CD8-positive, alpha-beta T cell (primary cell): ENCODE measurements at regions of chr7 and their contacts with region 1.

Region 1: DNA sequence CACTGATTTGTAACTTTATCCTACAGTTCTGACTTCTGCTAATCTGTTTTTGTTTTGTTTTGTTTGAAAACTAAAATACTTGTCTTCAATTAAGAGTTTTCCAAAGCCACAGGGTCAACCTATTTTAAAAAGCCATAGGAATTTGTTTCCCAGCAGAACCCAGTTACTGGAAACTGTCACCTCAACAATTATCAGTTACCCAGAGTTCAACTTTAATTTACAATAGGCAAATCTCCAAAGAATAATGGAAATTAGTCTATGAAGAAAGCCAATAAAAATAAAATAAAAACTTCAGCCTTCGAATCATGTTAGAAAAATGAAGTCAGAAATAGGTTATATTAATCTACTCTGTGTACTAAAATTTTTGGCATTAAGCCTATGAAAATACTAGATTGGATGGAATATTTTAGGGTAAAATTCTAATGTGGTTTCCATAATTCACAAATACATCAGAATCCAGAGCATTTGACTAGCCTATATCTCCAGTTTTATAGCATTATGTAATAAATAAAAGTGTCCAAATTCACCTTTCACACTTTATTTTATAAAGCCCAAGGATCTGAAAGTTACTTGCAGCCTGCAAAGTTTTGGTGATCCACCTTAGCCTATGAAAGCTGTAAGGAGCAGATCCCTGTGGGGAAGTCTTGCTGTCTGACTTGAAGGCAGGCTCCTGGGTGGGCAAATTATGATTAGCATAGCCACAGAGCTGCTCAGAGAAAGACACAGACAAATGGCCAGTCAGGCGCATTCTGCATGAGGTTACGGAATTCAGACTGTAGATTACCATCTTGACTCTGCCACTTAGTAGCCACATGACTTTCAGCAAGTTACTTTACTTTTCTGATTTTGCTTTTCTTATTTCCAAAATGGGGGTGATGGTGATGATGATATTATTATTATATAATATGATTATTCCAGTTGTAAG is 250.0 kb upstream of the HGF start:
- DNase-seq: no peak
- ATAC-seq: no peak
- H3K4me3 ChIP-seq: no peak overlapping the region
- H3K4me3 Mint-ChIP-seq: no peak overlapping the region
- H3K27ac ChIP-seq: no peak overlapping the region
- H3K27ac Mint-ChIP-seq: no peak overlapping the region
- H3K4me1 ChIP-seq: no peaks in the 10 kb centered on the region
- H3K4me1 Mint-ChIP-seq: no peaks in the 10 kb centered on the region
- H3K27me3 ChIP-seq: no peaks in the 10 kb centered on the region
- H3K27me3 Mint-ChIP-seq: no peaks in the 10 kb centered on the region
- CTCF ChIP-seq: no peak

Region 2: DNA sequence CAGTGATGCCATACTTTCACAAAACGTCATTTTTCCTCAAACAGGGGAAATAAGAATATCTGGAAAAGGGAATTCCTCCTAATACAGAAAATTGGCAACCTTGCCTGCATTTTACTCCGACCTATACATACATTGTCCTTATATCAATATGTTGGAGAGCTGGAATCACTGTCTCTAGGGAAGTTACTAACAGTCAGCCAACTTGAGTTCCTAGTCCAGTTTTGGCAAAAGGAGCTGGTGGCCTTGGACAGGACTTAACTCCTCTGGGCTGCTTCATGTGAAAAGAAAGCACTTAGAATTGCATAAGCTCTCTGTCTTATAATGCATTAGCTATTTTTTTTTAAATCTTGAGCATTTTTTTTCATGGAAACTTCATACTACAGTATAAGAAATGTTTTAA is 75.8 kb before region 1 on chr7:
- CTCF ChIA-PET with region 1: no interaction called
- POLR2A ChIA-PET with region 1: no interaction called
- intact Hi-C with region 1: no loop called
- DNase-seq: no peak
- ATAC-seq: no peak
- H3K4me3 ChIP-seq: no peak overlapping the region
- H3K4me3 Mint-ChIP-seq: no peak overlapping the region
- H3K27ac ChIP-seq: no peak overlapping the region
- H3K27ac Mint-ChIP-seq: no peak overlapping the region
- H3K4me1 ChIP-seq: no peaks in the 10 kb centered on the region
- H3K4me1 Mint-ChIP-seq: no peaks in the 10 kb centered on the region
- H3K27me3 ChIP-seq: no peaks in the 10 kb centered on the region
- H3K27me3 Mint-ChIP-seq: no peaks in the 10 kb centered on the region
- CTCF ChIP-seq: no peak

Region 3: DNA sequence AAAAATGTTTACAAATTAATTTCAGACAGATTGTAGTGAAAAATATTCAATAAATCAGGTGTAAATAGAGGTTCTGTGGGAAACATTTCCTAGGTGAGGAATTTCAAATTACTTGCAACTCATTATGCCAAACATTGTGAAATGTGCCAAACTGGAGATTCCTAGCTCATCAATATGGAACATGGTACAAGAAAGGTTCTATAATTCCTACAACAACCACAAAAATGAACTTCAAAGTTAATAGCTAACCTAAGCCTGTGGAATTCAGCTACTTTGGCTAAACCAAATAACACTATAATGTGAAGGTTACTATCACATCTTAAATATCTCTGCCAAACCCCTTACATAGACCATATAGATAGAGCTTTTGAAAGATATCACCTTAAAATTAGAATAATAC is 26.6 kb before region 1 on chr7:
- CTCF ChIA-PET with region 1: no interaction called
- POLR2A ChIA-PET with region 1: no interaction called
- intact Hi-C with region 1: loop called in 1 of 2 experiments (anchors 2 kb)
- DNase-seq: no peak
- ATAC-seq: no peak
- H3K4me3 ChIP-seq: no peak overlapping the region
- H3K4me3 Mint-ChIP-seq: no peak overlapping the region
- H3K27ac ChIP-seq: no peak overlapping the region
- H3K27ac Mint-ChIP-seq: no peak overlapping the region
- H3K4me1 ChIP-seq: no peaks in the 10 kb centered on the region
- H3K4me1 Mint-ChIP-seq: no peaks in the 10 kb centered on the region
- H3K27me3 ChIP-seq: no peaks in the 10 kb centered on the region
- H3K27me3 Mint-ChIP-seq: no peaks in the 10 kb centered on the region
- CTCF ChIP-seq: no peak